Sigmoid colon (tissue), 7 donors: ENCODE measurements at regions of chrX and their contacts with region 1.

Region 1: DNA sequence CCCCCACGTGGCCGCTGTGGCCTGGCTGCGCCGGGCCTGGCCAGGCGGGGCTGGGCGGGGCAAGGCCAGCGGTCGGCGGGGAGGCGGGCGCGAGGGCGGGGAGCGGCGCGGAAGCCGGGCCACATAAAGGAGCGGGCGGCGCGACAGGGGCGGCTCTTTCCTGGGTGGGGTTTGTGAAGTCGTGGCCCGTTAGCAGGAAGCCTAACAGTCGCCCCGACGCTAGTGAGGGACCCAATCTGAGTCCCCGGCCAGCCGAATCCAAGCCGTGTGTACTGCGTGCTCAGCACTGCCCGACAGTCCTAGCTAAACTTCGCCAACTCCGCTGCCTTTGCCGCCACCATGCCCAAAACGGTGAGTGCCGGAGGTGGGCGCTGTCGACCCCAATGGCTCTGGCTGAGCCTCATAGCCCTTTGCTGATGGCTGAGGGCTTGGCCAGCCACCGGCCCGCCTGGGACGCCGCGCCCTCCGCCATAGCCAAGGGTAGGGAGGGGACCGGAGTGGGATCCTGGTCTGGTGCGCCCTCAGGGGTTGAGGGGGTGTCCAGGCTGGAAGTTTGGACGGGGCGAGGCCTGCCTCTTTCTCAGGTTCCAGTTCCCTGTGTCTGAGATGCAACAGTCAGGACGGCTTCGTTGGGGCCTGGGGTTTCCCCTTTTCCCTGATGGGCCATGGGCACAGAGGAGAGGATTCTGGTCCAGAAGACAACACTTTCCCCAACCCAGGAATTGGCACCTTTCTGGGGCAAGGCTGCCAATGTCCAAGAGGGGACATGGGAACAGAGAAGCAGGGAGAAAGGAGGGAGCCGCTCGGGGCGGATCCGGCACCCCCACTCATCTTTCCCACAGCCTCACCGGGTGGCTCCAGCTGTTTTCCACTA is at the start of gene MSN:
- DNase-seq: peak; percentile 88
- H3K4me3 ChIP-seq: peak within 1 kb of the TSS; percentile 57 to 77 (median 68)
- H3K27ac ChIP-seq: peak within 1 kb of the TSS; percentile 93 to 96 (median 94)
- H3K4me1 ChIP-seq: peaks cover 0 to 31% (median 19%) of the 10 kb centered on the region in 4 donors
- H3K27me3 ChIP-seq: no peaks in the 10 kb centered on the region
- CTCF ChIP-seq: no peak
- EP300 ChIP-seq: no peak
- POLR2A ChIP-seq: peak; percentile 44 to 50
- total RNA-seq, gene MSN: 136 to 152 (median 144) TPM

Region 2: DNA sequence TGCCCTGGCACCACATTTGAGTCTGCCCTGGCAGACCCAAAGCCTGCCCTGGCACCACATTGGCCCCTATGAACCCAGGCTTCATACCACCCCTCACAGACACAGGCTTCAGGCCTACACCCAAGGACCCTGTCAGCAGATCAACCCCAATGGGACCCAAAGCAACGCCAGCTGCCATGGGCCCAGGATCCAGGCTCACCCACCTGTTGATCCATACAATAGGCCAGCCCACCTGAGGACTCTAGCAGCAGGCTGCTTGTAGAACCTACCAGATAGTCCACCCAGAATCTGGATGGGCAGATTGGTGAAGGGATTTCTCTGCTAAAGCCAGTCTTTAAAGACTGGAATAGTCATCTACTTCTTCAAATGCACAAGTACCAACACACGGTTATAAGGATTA is 247.6 kb before region 1 on chrX:
- intact Hi-C with region 1: no loop called
- DNase-seq: no peak
- H3K4me3 ChIP-seq: no peak overlapping the region
- H3K27ac ChIP-seq: no peak overlapping the region
- H3K4me1 ChIP-seq: no peaks in the 10 kb centered on the region
- H3K27me3 ChIP-seq: no peaks in the 10 kb centered on the region
- CTCF ChIP-seq: no peak
- EP300 ChIP-seq: no peak
- POLR2A ChIP-seq: no peak

Region 3: DNA sequence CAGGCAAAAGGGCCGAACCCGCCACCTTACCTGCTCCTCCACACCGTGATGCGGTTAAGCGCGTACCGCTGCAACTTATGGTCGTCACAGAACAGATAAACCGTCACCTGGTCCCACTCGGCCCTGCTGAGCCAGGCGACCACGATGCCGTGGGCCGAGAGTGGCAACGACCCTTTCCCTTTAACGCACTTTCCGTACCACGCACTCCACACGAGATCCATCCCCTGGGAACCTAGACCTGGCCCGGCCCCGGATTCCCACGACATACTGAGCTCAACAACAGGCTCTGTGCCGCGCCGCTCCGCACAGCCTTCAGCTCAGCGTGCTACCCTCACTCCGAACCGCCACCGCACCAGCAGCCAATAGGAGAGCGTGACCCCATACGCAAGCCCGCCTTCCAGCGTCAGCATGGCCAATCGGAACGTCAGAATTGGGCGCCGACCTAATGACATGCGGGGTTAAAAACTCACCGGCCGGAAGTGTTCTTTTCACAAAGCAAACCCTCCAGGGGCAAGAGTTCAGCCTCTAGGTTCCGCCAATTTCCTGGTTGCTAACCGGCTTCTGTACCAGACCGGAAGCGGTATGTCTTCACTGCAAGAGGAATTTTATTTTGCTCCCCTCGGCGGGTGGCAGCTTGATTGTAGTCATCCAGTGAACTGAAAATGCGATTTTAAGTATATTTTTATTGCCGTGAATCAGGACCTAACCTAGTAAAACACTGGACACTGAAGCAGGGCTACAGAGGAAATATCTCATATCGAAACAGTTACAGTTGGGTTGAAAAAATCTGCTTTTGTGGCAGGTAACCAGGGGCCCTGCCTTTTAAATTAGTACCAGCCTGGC is 133.1 kb before region 1 on chrX and contains the start of gene LAS1L:
- intact Hi-C with region 1: no loop called
- DNase-seq: peak; percentile 96
- H3K4me3 ChIP-seq: peak within 1 kb of the TSS; percentile 53 to 73 (median 64)
- H3K27ac ChIP-seq: peak within 1 kb of the TSS; percentile 59 to 78 (median 73)
- H3K4me1 ChIP-seq: peaks cover 0 to 12% (median 11%) of the 10 kb centered on the region in 4 donors
- H3K27me3 ChIP-seq: no peaks in the 10 kb centered on the region
- CTCF ChIP-seq: no peak
- EP300 ChIP-seq: no peak
- POLR2A ChIP-seq: peak in 1 of 2 donors; percentile 15
- total RNA-seq, gene LAS1L: 20.9 to 22.2 (median 21.3) TPM

Region 4: GRCh38 chrX:65601530-65602220 is 66.1 kb before region 1 on chrX:
- intact Hi-C with region 1: loop called (anchors 2 kb)
- DNase-seq: peak; percentile 89
- H3K4me3 ChIP-seq: no peak overlapping the region
- H3K27ac ChIP-seq: peak overlapping the region; percentile 57 to 77 (median 65)
- H3K4me1 ChIP-seq: peaks cover 0 to 8% (median 6%) of the 10 kb centered on the region in 4 donors
- H3K27me3 ChIP-seq: no peaks in the 10 kb centered on the region
- CTCF ChIP-seq: no peak
- EP300 ChIP-seq: peak in 1 of 4 donors; percentile 17
- POLR2A ChIP-seq: no peak

Region 5: GRCh38 chrX:65811558-65812228 is 144.0 kb after region 1 on chrX:
- intact Hi-C with region 1: no loop called
- DNase-seq: no peak
- H3K4me3 ChIP-seq: no peak overlapping the region
- H3K27ac ChIP-seq: no peak overlapping the region
- H3K4me1 ChIP-seq: no peaks in the 10 kb centered on the region
- H3K27me3 ChIP-seq: no peaks in the 10 kb centered on the region
- CTCF ChIP-seq: no peak
- EP300 ChIP-seq: no peak
- POLR2A ChIP-seq: no peak